ENCODE measurements at regions of chr2 and their contacts with region 1.

Region 1: DNA sequence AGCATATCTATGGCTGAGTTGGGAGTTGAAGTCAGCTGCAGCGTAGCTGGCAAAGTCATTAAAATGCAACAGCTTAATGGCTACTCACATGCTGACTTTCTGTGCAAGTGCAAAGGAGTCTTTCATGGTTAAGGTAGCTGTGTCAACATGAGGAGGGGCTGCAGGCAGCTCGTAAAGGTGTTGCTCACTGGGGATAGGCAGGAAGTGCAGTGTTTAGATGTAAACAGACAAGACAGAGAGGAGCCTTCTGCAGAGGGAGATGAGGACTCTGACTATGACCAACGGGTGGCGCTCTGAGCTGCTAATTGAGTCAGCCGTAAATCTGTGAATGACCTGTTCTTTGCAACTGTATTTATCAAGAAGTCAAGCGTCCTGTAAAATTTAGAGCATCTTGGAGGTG is 22.3 kb upstream of the CAVIN2 start:
- DNase-seq: peak; percentile 92
- ATAC-seq: peak; percentile 86
- H3K4me3 ChIP-seq: no peak overlapping the region
- H3K27ac ChIP-seq: peak overlapping the region; percentile 53
- H3K4me1 ChIP-seq: peaks cover 37% of the 10 kb centered on the region
- H3K27me3 ChIP-seq: no peaks in the 10 kb centered on the region
- CTCF ChIP-seq: peak; percentile 91

Region 2: DNA sequence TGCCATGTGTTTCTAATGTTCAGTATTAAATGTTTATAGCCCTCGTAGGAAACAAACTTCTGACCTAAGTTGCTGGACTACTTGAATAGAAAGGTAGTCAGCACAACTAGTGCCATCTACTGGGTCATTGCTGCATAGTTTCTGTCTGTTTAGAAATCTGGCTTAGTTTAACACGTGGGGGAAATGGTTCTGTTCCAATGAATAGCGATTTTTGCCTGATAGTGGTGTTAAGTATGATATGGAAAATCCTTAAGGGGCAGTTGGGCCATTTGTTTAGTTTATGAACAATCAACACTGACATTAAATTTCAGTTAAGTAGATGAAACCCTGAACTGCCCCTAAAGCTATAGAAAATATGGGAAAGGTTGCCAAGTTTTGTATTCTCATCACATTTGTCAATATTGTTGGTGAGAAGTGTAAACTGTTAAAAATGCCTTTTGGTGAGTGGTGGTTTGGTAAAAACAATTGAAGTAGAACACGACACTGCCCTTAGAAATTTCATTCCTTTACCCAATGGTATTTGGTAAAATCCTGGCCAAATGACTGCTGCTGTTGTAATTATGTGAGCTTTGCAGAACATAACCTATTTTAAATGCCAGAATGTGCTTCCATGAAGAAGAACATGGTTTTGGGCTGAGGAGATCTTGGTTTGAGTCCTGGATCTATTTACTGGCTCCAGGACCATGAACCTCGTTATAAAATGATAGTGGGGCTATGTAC is 178.0 kb before region 1 on chr2:
- CTCF ChIA-PET with region 1: no interaction called
- POLR2A ChIA-PET with region 1: no interaction called
- intact Hi-C with region 1: loop called (anchors 5 kb)
- DNase-seq: peak; percentile 92
- ATAC-seq: peak; percentile 45
- H3K4me3 ChIP-seq: no peak overlapping the region
- H3K27ac ChIP-seq: peak overlapping the region; percentile 26
- H3K4me1 ChIP-seq: peaks cover 49% of the 10 kb centered on the region
- H3K27me3 ChIP-seq: no peaks in the 10 kb centered on the region
- CTCF ChIP-seq: peak; percentile 93

Region 3: GRCh38 chr2:191846515-191847476 is 22.4 kb before region 1 on chr2 and contains the start of gene CAVIN2:
- CTCF ChIA-PET with region 1: no interaction called
- POLR2A ChIA-PET with region 1: no interaction called
- intact Hi-C with region 1: no loop called
- DNase-seq: peak; percentile 60
- ATAC-seq: peak; percentile 84
- H3K4me3 ChIP-seq: no peak within 1 kb of the TSS
- H3K27ac ChIP-seq: no peak within 1 kb of the TSS
- H3K4me1 ChIP-seq: peaks cover 4% of the 10 kb centered on the region; the same call in 1 of the 2 replicates
- H3K27me3 ChIP-seq: no peaks in the 10 kb centered on the region
- CTCF ChIP-seq: no peak
- total RNA-seq, gene CAVIN2: 0.07 TPM in 1 of 2 replicates, not detected in the other

Region 4: GRCh38 chr2:191857259-191857805 is 11.8 kb before region 1 on chr2:
- CTCF ChIA-PET with region 1: interaction called, 3 read pairs
- POLR2A ChIA-PET with region 1: interaction called, 10 read pairs
- intact Hi-C with region 1: no loop called
- DNase-seq: peak; percentile 83
- ATAC-seq: peak; percentile 89
- H3K4me3 ChIP-seq: no peak overlapping the region
- H3K27ac ChIP-seq: no peak overlapping the region
- H3K4me1 ChIP-seq: peaks cover 24% of the 10 kb centered on the region
- H3K27me3 ChIP-seq: no peaks in the 10 kb centered on the region
- CTCF ChIP-seq: no peak

Region 5: GRCh38 chr2:192087398-192087958 is 218.3 kb after region 1 on chr2:
- CTCF ChIA-PET with region 1: interaction called, 3 read pairs
- POLR2A ChIA-PET with region 1: no interaction called
- intact Hi-C with region 1: loop called (anchors 5 kb)
- DNase-seq: peak; percentile 26
- ATAC-seq: peak; percentile 99
- H3K4me3 ChIP-seq: no peak overlapping the region
- H3K27ac ChIP-seq: no peak overlapping the region
- H3K4me1 ChIP-seq: 0 out of 2 replicates have a peak, but pooled peaks cover 4% of the 10 kb centered on the region
- H3K27me3 ChIP-seq: 0 out of 2 replicates have a peak, but pooled peaks cover 2% of the 10 kb centered on the region
- CTCF ChIP-seq: no peak